GM10248 (cell line): ENCODE measurements at regions of chr2 and their contacts with region 1.

Region 1: DNA sequence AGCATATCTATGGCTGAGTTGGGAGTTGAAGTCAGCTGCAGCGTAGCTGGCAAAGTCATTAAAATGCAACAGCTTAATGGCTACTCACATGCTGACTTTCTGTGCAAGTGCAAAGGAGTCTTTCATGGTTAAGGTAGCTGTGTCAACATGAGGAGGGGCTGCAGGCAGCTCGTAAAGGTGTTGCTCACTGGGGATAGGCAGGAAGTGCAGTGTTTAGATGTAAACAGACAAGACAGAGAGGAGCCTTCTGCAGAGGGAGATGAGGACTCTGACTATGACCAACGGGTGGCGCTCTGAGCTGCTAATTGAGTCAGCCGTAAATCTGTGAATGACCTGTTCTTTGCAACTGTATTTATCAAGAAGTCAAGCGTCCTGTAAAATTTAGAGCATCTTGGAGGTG is 22.3 kb upstream of the CAVIN2 start:
- DNase-seq: no peak
- CTCF ChIP-seq: no peak

Region 2: GRCh38 chr2:191740016-191740419 is 129.2 kb before region 1 on chr2:
- CTCF ChIA-PET with region 1: no interaction called
- POLR2A ChIA-PET with region 1: no interaction called
- DNase-seq: peak; percentile 34
- CTCF ChIP-seq: no peak

Region 3: DNA sequence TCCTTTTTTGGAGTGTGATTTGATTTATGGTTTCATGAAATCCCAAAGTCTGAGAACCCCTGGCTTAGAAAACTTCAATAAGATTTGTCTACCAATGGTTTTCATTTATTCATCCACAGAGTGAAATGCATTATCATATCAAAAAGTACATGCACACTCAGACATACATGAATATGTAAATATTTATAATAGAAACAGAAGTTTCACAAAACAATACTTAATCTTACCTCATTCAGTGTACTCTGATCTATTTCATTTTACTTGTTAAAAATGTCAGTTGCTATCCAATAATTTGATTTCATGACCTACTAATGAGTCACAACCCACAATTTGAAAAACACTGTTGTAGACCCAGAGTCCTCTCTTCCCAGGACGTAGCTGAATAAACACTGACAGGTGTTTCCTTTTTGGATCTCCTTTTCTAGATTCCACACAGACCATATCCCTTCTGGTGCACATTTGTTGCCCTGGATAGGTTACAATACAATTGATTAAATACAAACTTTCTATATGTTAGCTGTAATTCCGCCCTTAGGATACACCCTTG is 11.8 kb before region 1 on chr2:
- CTCF ChIA-PET with region 1: interaction called, 14 read pairs
- POLR2A ChIA-PET with region 1: no interaction called
- DNase-seq: no peak
- CTCF ChIP-seq: no peak